ENCODE measurements at regions of chr6 and their contacts with region 1.

Region 1: DNA sequence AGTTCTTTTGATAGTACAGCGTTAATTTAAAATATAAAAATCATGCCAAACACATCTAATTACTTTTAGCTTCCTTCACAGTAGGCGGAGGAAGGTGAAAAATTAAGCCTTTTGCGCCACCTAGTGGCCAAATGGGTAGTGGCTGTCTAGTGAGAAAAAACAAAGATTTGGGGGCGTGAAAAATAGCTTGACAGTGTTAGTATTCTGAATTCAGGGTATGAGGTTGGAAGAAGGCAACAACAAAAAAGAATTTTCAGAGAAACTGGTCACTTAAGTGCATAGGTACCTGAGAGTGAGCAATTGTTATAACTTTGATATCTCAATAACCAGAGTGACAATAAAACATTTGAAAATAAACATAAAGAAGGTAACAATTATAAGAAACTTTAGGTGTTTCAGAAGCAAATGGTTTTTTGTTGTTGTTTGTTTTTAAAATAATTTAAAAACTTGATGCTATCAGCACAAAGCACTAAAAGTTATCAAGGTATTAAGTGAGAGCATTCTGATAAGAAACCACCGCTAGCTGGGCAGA is 14.3 kb downstream of the PSMB9 start:
- H3K4me3 ChIP-seq: no peak overlapping the region
- H3K27ac ChIP-seq: no peak overlapping the region
- H3K4me1 ChIP-seq: 0 out of 2 replicates have a peak, but pooled peaks cover 3% of the 10 kb centered on the region
- CTCF ChIP-seq: peak; percentile 63

Region 2: DNA sequence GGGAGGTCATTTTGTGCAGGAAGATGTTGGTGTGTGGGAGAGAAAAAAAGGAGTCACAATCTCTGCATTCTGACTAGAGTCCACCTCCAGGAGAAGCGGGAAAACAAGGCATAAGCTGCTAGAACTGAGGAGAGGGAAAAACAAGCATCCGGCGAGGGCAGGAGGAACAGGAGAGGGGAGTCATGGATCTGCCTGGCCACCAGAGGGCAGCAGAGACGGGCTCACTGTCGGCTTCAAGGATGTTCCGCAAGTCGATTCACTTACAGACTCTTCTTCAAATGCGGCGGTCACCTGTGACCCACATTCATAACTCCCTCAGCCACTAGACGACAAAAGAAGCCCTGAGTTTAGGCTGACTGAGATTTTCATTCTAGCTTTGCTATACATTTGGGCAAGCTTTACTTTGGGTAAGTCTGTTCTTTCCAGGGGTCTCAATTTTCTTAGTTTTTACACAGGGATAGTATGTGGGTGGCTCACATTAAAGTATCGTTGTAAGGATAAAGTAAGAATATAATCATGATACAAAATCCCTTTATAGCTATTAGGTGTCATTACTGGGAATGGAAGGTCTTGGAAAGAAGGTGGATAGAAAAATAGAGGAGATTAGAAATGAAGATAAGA is 454.8 kb before region 1 on chr6:
- CTCF ChIA-PET with region 1: interaction called, 53 read pairs
- POLR2A ChIA-PET with region 1: no interaction called
- H3K4me3 ChIP-seq: no peak overlapping the region
- H3K27ac ChIP-seq: no peak overlapping the region
- H3K4me1 ChIP-seq: no peaks in the 10 kb centered on the region
- CTCF ChIP-seq: peak; percentile 91

Region 3: DNA sequence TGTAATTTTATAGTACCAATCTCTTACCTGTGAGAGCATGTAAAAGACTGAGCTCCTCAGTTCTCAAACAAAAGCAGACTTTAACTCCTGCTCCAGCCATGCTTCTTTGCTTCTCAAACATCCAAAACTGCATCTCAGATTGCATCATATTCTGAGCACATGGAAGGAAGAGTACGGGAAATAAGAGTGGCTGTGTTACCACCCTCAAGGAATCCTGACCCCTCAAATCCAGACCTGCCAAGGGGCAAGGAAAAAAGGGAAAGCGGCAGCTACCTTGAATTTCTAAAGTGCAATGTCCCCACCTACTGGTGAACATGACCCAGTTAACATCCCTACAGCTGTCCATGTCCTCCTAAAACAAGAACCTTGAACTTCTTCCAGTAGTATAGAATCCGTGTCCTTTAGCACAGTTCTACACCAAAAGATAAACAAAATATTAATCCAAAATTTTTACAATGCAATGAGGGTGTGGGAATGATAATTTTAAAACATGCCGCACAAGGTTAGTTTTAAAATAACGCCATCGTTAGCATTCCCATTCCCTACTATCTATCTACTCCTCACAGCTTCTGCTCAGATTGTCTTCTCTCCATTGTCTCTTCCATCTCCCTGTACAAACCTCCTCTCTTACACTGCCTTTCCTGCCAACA is 167.8 kb before region 1 on chr6:
- CTCF ChIA-PET with region 1: interaction called, 24 read pairs
- POLR2A ChIA-PET with region 1: no interaction called
- H3K4me3 ChIP-seq: no peak overlapping the region
- H3K27ac ChIP-seq: no peak overlapping the region
- H3K4me1 ChIP-seq: no peaks in the 10 kb centered on the region
- CTCF ChIP-seq: peak; percentile 85

Region 4: GRCh38 chr6:32807020-32807580 is 61.2 kb before region 1 on chr6:
- CTCF ChIA-PET with region 1: interaction called, 24 read pairs
- POLR2A ChIA-PET with region 1: no interaction called
- H3K4me3 ChIP-seq: no peak overlapping the region
- H3K27ac ChIP-seq: no peak overlapping the region
- H3K4me1 ChIP-seq: no peaks in the 10 kb centered on the region
- CTCF ChIP-seq: no peak

Region 5: GRCh38 chr6:32843979-32844838 is 24.1 kb before region 1 on chr6 and contains the start of gene PSMB8:
- CTCF ChIA-PET with region 1: interaction called, 355 read pairs
- POLR2A ChIA-PET with region 1: interaction called, 21 read pairs
- H3K4me3 ChIP-seq: peak within 1 kb of the TSS; percentile 31
- H3K27ac ChIP-seq: no peak within 1 kb of the TSS
- H3K4me1 ChIP-seq: no peaks in the 10 kb centered on the region
- CTCF ChIP-seq: no peak

Region 6: DNA sequence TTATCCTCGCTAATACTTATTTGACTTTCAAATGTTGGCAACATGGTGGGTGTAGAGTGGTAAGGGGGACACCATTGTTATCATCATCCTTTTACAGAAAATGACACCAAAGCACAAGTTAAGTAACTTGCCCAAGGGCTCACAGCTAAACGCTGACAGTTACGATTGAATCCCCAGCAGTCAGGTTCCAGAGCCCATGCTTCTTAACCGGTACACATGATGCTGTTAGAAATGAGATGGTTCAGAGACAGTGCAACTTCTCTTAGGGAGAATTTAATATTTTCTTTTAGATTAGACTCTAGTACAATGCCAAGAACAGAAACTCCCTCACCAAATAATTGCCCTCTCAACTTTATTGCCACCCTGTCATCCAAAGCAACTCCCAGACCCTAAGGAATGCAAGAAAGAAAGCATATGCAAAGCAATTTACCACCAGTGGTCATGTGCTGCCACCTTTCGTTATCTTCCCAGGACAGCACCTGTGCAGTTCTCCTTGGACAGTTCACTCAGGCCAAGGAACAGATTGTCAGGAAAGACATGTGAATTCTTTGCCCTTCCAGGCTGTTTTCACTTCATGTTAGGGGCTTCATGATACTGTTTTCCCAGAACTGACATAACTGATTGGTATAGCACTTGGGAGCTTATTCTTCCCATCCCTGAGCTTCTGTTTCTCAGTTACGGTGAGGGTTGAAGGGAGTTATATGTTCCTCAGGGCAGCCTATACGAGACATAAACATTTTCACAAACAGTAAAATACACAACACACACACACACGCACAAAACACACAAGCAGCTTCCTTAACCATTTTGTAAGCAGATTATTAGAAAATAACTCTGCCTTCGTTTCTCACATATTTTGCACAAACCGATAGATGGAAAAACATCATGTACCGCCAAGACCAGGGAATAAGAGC is 79.5 kb after region 1 on chr6:
- CTCF ChIA-PET with region 1: interaction called, 14 read pairs
- POLR2A ChIA-PET with region 1: no interaction called
- H3K4me3 ChIP-seq: no peak overlapping the region
- H3K27ac ChIP-seq: no peak overlapping the region
- H3K4me1 ChIP-seq: no peaks in the 10 kb centered on the region
- CTCF ChIP-seq: peak; percentile 82

Region 7: GRCh38 chr6:33000055-33000454 is 131.7 kb after region 1 on chr6:
- CTCF ChIA-PET with region 1: no interaction called
- POLR2A ChIA-PET with region 1: no interaction called
- H3K4me3 ChIP-seq: no peak overlapping the region
- H3K27ac ChIP-seq: no peak overlapping the region
- H3K4me1 ChIP-seq: no peaks in the 10 kb centered on the region
- CTCF ChIP-seq: peak; percentile 74